H1 (cell line): ENCODE measurements at regions of chr12 and their contacts with region 1.

Region 1: DNA sequence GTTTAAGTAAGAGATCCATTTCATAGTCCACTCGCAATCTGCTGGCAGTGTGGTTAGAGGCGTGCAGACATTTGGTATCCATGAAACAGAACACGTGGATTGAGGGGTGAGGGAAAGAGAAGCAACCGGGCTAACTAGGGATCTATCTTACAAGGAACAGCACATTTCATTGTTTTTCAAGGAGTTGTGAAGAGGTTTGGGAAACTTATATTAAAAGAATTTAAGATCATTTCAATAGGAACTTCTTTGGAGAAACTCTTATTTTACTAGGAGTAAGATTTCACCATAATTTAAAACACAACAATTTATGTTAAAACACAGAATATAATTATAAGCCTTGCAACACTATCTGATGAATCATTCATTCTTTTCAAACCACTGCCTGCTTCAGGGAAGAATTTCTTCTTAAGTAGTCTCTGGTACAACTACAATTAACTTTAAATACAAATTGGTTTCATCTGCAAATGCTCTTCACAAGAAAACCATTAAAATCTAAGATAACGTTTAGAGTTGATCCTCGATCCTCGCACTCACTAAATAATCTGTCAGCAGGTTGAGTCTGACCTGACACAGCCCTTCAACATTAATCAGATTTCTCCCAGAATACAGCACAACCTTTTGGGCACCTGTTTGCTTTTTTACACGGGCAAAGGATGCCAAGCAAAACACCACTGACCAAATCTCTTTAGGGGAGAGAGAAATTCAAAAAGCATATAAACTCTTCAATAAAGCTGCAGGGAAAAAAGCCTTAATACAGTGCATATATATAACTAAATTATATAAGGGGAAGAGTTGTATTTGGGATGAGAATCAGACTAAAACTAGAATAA is 27.3 kb downstream of the PPTC7 start:
- DNase-seq: no peak
- H3K4me3 ChIP-seq: no peak overlapping the region
- H3K27ac ChIP-seq: no peak overlapping the region
- H3K4me1 ChIP-seq: no peaks in the 10 kb centered on the region
- H3K27me3 ChIP-seq: no peaks in the 10 kb centered on the region
- CTCF ChIP-seq: no peak
- EP300 ChIP-seq: no peak
- POLR2A ChIP-seq: no peak
- RAD21 ChIP-seq: no peak

Region 2: DNA sequence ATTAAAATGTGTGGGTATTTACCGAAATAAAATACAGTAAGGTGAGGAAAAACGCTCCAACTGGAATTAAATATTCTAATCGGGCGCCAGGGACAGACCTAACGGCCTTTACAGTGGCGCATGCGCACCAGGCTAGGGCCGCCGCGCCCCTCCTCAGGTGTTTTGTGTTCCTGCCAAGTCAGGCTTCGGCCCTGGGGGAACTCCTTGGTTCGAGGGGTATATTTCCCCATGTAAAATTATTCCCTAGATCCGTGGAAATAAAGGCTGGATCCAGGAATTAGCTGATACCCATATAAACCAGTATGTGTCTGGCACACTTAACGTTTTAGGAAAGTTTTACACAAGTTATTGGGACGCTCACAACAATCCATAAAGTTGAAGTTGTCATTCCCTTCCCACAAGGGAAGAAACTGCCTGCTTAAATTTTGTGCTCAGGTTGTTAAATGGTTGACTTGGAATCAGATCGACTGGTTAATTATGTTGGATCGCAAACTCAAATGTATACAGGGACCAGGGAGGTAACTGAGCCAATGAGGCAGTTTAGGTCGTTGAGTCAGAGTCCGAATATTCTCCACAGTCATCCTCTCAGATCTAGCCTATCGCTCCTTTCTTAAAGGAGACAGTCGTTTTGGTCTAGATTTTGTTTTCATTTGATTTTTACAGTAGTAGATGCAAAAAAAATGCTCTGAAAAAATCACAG is 151.7 kb before region 1 on chr12:
- CTCF ChIA-PET with region 1: no interaction called
- POLR2A ChIA-PET with region 1: no interaction called
- DNase-seq: peak; percentile 38 to 83
- H3K4me3 ChIP-seq: peak overlapping the region; percentile 69 to 96 (median 91)
- H3K27ac ChIP-seq: peak overlapping the region; percentile 99
- H3K4me1 ChIP-seq: peaks cover 0 to 4% (median 0%) of the 10 kb centered on the region in 4 experiments; a peak in 1 of 7 replicates
- H3K27me3 ChIP-seq: no peaks in the 10 kb centered on the region
- CTCF ChIP-seq: no peak
- EP300 ChIP-seq: no peak
- POLR2A ChIP-seq: peak in 1 of 2 experiments; percentile 34; a peak in 1 of 3 replicates
- RAD21 ChIP-seq: no peak

Region 3: GRCh38 chr12:110531741-110532333 is 24.0 kb before region 1 on chr12:
- CTCF ChIA-PET with region 1: interaction called, 16 read pairs
- POLR2A ChIA-PET with region 1: interaction called, 4 read pairs
- DNase-seq: no peak
- H3K4me3 ChIP-seq: no peak overlapping the region
- H3K27ac ChIP-seq: no peak overlapping the region
- H3K4me1 ChIP-seq: no peaks in the 10 kb centered on the region
- H3K27me3 ChIP-seq: no peaks in the 10 kb centered on the region
- CTCF ChIP-seq: no peak
- EP300 ChIP-seq: no peak
- POLR2A ChIP-seq: no peak
- RAD21 ChIP-seq: no peak

Region 4: GRCh38 chr12:110543252-110543959 is 12.4 kb before region 1 on chr12:
- CTCF ChIA-PET with region 1: interaction called, 12 read pairs
- POLR2A ChIA-PET with region 1: no interaction called
- DNase-seq: no peak
- H3K4me3 ChIP-seq: no peak overlapping the region
- H3K27ac ChIP-seq: no peak overlapping the region
- H3K4me1 ChIP-seq: no peaks in the 10 kb centered on the region
- H3K27me3 ChIP-seq: no peaks in the 10 kb centered on the region
- CTCF ChIP-seq: no peak
- EP300 ChIP-seq: no peak
- POLR2A ChIP-seq: no peak
- RAD21 ChIP-seq: no peak

Region 5: DNA sequence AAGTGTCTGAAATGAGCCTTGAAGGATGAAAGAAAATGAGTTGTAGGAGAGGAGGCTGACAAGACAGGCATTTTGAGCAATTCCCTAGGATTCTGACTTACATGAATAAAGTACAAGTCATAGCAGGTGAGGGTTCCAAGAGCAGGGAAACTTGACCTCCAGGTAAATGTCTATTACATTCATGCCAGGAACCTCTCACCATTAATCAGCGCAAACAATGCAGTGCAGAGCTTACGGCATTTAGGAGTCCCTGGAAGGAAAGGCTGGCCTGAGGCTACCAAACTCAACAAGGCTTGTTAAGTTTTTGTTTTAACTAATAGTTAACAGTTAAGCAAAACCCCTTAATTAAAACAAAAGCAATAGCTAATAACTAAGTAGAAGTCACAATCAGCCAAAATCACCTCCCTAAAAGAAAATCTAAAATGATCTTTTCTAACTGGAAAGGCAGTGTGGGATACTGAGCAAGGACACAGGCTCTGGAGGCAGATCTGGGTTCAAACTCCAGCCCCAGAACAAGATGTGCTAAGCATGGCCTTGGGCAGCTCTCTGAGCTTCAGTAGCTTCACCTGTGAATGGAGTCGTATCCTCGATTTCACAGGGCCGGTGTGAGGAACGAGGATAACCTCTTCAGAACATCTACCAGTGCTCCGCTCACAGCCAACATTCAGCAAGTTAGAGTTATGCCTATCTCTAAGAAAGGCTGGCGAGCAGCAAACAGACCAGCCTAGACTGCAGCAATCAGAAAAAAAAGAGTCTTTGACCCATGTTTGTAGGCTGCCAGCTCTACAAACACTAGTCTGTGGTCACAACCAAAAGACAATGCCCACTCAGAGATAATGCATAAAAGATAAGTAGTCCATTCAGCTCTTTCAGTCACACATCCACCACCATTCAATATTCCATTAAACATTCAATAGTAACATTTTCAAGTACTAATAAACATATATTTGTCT is 10.4 kb after region 1 on chr12:
- CTCF ChIA-PET with region 1: interaction called, 12 read pairs
- POLR2A ChIA-PET with region 1: no interaction called
- DNase-seq: peak in 1 of 2 experiments; percentile 41
- H3K4me3 ChIP-seq: no peak overlapping the region
- H3K27ac ChIP-seq: no peak overlapping the region
- H3K4me1 ChIP-seq: no peaks in the 10 kb centered on the region; a peak in 2 of 7 replicates
- H3K27me3 ChIP-seq: no peaks in the 10 kb centered on the region
- CTCF ChIP-seq: no peak
- EP300 ChIP-seq: no peak
- POLR2A ChIP-seq: no peak
- RAD21 ChIP-seq: no peak

Region 6: GRCh38 chr12:110661337-110661972 is 105.7 kb after region 1 on chr12:
- CTCF ChIA-PET with region 1: no interaction called
- POLR2A ChIA-PET with region 1: no interaction called
- DNase-seq: no peak
- H3K4me3 ChIP-seq: no peak overlapping the region
- H3K27ac ChIP-seq: no peak overlapping the region
- H3K4me1 ChIP-seq: no peaks in the 10 kb centered on the region
- H3K27me3 ChIP-seq: no peaks in the 10 kb centered on the region
- CTCF ChIP-seq: no peak
- EP300 ChIP-seq: no peak
- POLR2A ChIP-seq: no peak
- RAD21 ChIP-seq: no peak